PC-9 (cell line): ENCODE measurements at regions of chr10 and their contacts with region 1.

Region 1: GRCh38 chr10:52883996-52884871 is 111.7 kb upstream of the MBL2 start:
- DNase-seq: peak; percentile 91 to 98
- H3K4me3 ChIP-seq: peak overlapping the region; percentile 13; the same call in 1 of the 2 replicates
- H3K27ac ChIP-seq: peak overlapping the region; percentile 28; the same call in 1 of the 2 replicates
- H3K4me1 ChIP-seq: peaks cover 13% of the 10 kb centered on the region; the same call in 1 of the 2 replicates
- H3K27me3 ChIP-seq: 0 out of 2 replicates have a peak, but pooled peaks cover 7% of the 10 kb centered on the region
- CTCF ChIP-seq: peak; percentile 97

Region 2: DNA sequence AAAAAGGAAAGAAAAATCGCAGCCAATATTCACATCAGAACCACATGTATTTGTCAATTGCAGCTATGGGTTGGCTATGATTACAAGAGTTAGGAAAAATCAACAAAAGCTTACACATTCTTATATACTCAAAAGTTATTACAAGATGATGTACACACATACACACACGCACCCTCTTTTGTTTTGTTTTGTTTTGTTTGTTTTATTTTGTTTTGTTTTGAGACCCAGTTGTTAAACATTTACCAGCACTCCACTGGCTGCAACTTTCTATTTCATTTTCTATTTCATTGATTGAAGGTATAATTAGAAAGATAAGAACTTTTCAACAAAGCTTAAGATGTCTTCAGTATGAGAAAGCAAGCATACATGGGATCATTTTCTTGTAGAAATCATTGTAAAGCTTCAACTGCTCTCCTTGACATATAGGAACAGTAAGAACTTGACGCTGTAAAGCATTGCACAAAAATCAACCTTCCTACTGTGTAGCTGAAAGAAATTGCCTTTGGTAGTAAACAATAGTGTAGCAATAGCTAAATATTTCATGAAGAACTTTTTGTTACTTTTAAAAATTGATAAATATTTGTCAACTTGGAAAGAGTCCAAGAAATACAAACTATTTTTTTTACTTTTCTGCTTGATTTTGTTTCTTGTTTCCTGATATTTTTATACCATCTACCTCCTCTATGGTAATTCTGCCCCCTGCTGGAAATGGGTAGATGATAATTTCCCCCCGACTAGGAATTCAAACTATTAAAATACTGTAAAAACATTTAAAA is 317.6 kb before region 1 on chr10:
- CTCF ChIA-PET with region 1: no interaction called
- POLR2A ChIA-PET with region 1: no interaction called
- intact Hi-C with region 1: no loop called
- DNase-seq: peak; percentile 25 to 60
- H3K4me3 ChIP-seq: no peak overlapping the region
- H3K27ac ChIP-seq: no peak overlapping the region
- H3K4me1 ChIP-seq: peaks cover 7% of the 10 kb centered on the region
- H3K27me3 ChIP-seq: no peaks in the 10 kb centered on the region
- CTCF ChIP-seq: peak; percentile 78

Region 3: DNA sequence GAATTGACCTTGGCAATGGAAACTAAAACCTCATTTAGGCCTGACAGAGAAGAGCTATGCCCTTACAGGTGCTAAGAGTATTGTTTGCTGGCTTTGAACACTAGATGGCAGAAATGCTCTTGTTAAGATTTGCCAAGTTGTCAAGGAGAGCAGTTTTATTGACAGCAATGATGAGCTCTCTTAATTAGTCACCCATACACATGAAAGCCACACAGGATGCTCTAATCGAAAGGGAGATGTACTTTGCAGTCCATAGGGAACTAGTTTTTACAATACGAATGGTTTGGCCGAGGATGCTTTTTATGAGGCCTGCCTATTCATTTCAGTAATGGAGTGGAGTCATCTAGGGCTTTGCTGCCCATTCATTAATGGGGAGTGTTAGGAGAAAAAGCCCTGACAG is 66.2 kb before region 1 on chr10:
- CTCF ChIA-PET with region 1: interaction called, 4 read pairs
- POLR2A ChIA-PET with region 1: no interaction called
- intact Hi-C with region 1: loop called (anchors 1 kb)
- DNase-seq: peak; percentile 25 to 64
- H3K4me3 ChIP-seq: no peak overlapping the region
- H3K27ac ChIP-seq: no peak overlapping the region
- H3K4me1 ChIP-seq: no peaks in the 10 kb centered on the region
- H3K27me3 ChIP-seq: no peaks in the 10 kb centered on the region
- CTCF ChIP-seq: peak; percentile 79

Region 4: GRCh38 chr10:53209944-53210611 is 325.8 kb after region 1 on chr10:
- CTCF ChIA-PET with region 1: no interaction called
- POLR2A ChIA-PET with region 1: no interaction called
- intact Hi-C with region 1: loop called (anchors 1 kb)
- DNase-seq: peak in 1 of 2 experiments; percentile 33
- H3K4me3 ChIP-seq: no peak overlapping the region
- H3K27ac ChIP-seq: no peak overlapping the region
- H3K4me1 ChIP-seq: no peaks in the 10 kb centered on the region
- H3K27me3 ChIP-seq: no peaks in the 10 kb centered on the region
- CTCF ChIP-seq: peak; percentile 76

Region 5: DNA sequence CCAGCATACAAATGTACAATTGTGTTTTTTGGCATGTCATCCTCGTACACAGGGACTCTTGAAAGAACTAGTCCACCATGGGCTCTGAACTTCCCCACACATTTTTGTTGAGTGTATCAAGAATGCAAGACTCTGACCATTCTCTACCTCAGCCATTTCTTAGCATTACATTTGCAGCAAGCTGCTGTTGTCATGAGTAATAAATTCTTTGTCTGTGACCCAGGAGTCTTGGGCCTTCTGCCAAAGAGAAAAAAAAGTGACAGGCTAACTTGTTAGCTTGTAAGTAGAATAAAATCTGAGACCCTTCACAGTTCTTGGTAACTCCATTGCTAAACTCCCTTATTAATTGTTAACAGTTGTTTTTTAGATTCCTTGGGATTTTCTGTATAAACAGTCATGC is 430.6 kb after region 1 on chr10:
- CTCF ChIA-PET with region 1: no interaction called
- POLR2A ChIA-PET with region 1: no interaction called
- intact Hi-C with region 1: loop called (anchors 1 kb)
- DNase-seq: peak; percentile 67 to 76
- H3K4me3 ChIP-seq: no peak overlapping the region
- H3K27ac ChIP-seq: no peak overlapping the region
- H3K4me1 ChIP-seq: no peaks in the 10 kb centered on the region
- H3K27me3 ChIP-seq: no peaks in the 10 kb centered on the region
- CTCF ChIP-seq: no peak

Region 6: DNA sequence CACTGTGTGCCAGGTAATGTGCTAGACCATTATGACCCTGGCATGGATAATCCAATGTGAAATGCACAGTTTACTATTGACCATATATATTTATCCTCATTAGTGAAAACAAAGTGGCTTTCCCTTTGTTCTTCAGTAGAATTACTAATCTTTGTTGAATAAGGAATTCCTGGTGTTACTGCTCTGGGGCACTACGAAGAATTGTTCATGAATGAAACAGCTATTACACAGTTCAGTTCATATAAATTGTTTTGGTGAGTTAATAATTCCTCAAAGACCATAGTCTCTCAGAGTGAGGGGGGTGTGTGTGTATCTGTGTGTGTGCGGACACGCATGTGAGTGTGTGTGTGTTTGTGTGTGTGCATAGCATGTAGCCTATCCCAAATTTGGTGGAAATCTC is 556.4 kb after region 1 on chr10:
- CTCF ChIA-PET with region 1: no interaction called
- POLR2A ChIA-PET with region 1: no interaction called
- intact Hi-C with region 1: no loop called
- DNase-seq: no peak
- H3K4me3 ChIP-seq: no peak overlapping the region
- H3K27ac ChIP-seq: no peak overlapping the region
- H3K4me1 ChIP-seq: no peaks in the 10 kb centered on the region
- H3K27me3 ChIP-seq: no peaks in the 10 kb centered on the region
- CTCF ChIP-seq: no peak

Region 7: DNA sequence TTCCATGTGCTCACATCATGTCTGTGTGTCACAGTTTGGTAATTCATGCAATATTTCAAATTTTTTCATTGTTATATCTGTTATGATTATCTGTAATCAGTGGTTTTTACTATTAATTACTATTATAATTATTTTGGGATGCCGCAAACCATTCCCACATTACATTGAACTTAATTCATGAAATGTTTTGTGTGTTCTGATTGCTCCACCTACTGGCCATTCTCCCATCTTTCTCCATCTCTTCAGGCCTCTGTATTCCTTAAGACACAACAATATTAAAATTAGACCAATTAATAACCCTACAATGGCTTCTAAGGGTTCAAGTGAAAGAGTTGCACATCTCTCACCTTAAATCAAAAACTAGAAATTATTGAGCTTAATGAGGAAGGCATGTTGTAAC is 1518.3 kb after region 1 on chr10:
- CTCF ChIA-PET with region 1: no interaction called
- POLR2A ChIA-PET with region 1: no interaction called
- intact Hi-C with region 1: loop called (anchors 1 kb)
- DNase-seq: no peak
- H3K4me3 ChIP-seq: no peak overlapping the region
- H3K27ac ChIP-seq: no peak overlapping the region
- H3K4me1 ChIP-seq: no peaks in the 10 kb centered on the region
- H3K27me3 ChIP-seq: no peaks in the 10 kb centered on the region
- CTCF ChIP-seq: peak; percentile 75